ENCODE measurements at regions of chr16 and their contacts with region 1.

Region 1: GRCh38 chr16:56851671-56852400 is 13.2 kb upstream of the SLC12A3 start:
- DNase-seq: no peak
- ATAC-seq: no peak
- H3K4me3 Mint-ChIP-seq: no peak overlapping the region
- H3K27ac Mint-ChIP-seq: no peak overlapping the region
- H3K4me1 Mint-ChIP-seq: peaks cover 39% of the 10 kb centered on the region
- H3K27me3 Mint-ChIP-seq: no peaks in the 10 kb centered on the region

Region 2: GRCh38 chr16:56781528-56781961 is 70.3 kb before region 1 on chr16:
- CTCF ChIA-PET with region 1: no interaction called
- DNase-seq: no peak
- ATAC-seq: no peak
- H3K4me3 Mint-ChIP-seq: no peak overlapping the region
- H3K27ac Mint-ChIP-seq: no peak overlapping the region
- H3K4me1 Mint-ChIP-seq: peaks cover 39% of the 10 kb centered on the region
- H3K27me3 Mint-ChIP-seq: peaks cover 3% of the 10 kb centered on the region

Region 3: DNA sequence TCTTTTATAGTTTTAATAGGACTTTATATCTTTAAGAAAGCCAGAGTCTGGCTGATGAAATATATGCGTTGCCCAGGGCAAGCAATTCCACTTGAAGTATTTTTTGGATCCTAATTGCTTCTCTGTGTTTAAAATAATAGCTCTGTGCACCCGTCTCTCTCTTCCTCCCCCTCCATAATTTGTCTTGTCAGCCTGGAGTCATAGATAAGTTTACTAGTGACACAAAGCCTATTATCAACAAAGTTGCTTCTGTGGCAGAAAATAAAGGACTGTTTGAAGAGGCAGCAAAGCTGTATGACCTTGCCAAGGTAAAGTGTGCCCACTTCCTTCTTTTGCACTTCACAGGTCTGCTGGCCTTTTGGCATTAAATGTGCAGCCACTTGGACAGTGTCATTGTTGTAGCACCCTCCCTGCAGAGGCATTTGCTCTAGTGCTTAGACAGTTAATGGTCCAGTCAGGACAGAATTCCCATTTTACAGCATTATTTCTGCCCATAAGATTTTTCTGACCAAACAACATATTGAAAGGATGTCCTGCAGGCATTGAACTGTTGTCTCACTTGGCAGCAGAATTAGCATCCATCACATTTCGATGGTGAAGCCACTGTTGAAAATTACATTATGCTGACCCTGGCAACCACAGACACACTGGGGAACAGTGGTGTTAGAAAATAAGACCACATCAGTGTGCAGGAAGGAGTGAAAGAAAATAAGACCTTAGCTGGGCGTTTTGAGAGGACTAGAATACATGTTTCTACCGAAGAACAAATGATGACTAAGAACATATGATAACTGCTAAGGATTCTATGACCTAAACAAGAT is 15.2 kb before region 1 on chr16:
- CTCF ChIA-PET with region 1: interaction called, 11 read pairs
- DNase-seq: no peak
- ATAC-seq: no peak
- H3K4me3 Mint-ChIP-seq: no peak overlapping the region
- H3K27ac Mint-ChIP-seq: no peak overlapping the region
- H3K4me1 Mint-ChIP-seq: peaks cover 18% of the 10 kb centered on the region
- H3K27me3 Mint-ChIP-seq: no peaks in the 10 kb centered on the region

Region 4: GRCh38 chr16:56888806-56889205 is 37.0 kb after region 1 on chr16:
- CTCF ChIA-PET with region 1: no interaction called
- DNase-seq: no peak
- ATAC-seq: no peak
- H3K4me3 Mint-ChIP-seq: no peak overlapping the region
- H3K27ac Mint-ChIP-seq: no peak overlapping the region
- H3K4me1 Mint-ChIP-seq: no peaks in the 10 kb centered on the region
- H3K27me3 Mint-ChIP-seq: peaks cover 4% of the 10 kb centered on the region

Measured in activated CD8-positive, alpha-beta memory T cell treated with anti-CD3 and anti-CD28 coated beads, Interleukin-2, amount 10 ng/mL, durations not matched to agents 7 days and 5 days (primary cell).